CD8-positive, alpha-beta memory T cell (primary cell): ENCODE measurements at regions of chr15 and their contacts with region 1.

Region 1: GRCh38 chr15:42704492-42704926 is 32.4 kb downstream of the CDAN1 start:
- DNase-seq: peak; percentile 20 to 66 (median 41)
- H3K4me3 ChIP-seq: no peak overlapping the region
- H3K4me3 Mint-ChIP-seq: no peak overlapping the region
- H3K27ac ChIP-seq: no peak overlapping the region
- H3K27ac Mint-ChIP-seq: no peak overlapping the region
- H3K4me1 ChIP-seq: no peaks in the 10 kb centered on the region
- H3K4me1 Mint-ChIP-seq: no peaks in the 10 kb centered on the region
- H3K27me3 ChIP-seq: no peaks in the 10 kb centered on the region
- H3K27me3 Mint-ChIP-seq: no peaks in the 10 kb centered on the region

Region 2: GRCh38 chr15:42723054-42723453 is 18.5 kb after region 1 on chr15:
- CTCF ChIA-PET with region 1: no interaction called
- POLR2A ChIA-PET with region 1: no interaction called
- DNase-seq: no peak
- H3K4me3 ChIP-seq: no peak overlapping the region
- H3K4me3 Mint-ChIP-seq: no peak overlapping the region
- H3K27ac ChIP-seq: no peak overlapping the region
- H3K27ac Mint-ChIP-seq: peak overlapping the region in 5 of 8 donors; percentile 34 to 86 (median 52)
- H3K4me1 ChIP-seq: no peaks in the 10 kb centered on the region
- H3K4me1 Mint-ChIP-seq: no peaks in the 10 kb centered on the region
- H3K27me3 ChIP-seq: no peaks in the 10 kb centered on the region
- H3K27me3 Mint-ChIP-seq: no peaks in the 10 kb centered on the region

Region 3: DNA sequence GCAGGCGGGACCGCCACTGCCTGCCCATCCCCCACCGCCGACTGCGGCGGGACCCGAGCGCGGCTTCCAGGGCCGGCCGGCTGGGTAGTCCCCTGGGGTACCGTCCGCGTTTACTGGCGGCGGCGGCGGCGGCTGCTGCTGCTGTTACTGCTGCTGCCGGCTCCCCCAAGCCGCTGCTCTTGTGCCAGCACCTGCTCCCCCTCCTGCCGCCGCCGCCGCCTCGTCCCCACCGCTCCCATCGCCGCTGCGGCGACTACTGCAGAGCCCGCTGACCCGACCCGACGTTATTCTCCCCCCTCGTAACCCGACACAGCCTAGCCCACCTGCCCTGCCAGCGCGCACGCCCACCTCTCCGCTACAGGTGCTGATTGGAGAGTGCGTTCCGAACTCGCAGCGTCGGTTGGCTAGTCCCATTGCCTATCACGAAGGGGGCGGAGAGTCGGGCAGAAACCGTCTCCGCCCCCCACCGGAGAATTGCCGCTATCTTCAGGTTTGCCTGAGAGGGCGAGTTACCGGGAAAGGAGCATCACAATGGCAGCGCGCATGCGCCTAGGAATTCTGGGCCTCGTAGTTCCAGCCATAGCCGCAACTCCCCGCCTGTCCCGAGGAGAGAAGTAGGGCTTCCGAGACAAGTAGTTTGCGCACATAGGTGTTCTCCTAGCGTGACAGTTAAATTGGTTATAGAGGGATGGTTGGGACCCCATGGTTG is 216.2 kb after region 1 on chr15 and contains the start of gene TTBK2:
- CTCF ChIA-PET with region 1: interaction called, 35 read pairs
- POLR2A ChIA-PET with region 1: no interaction called
- DNase-seq: peak; percentile 96 to 99 (median 97)
- H3K4me3 ChIP-seq: peak within 1 kb of the TSS; percentile 71
- H3K4me3 Mint-ChIP-seq: peak within 1 kb of the TSS; percentile 94 to 99 (median 98)
- H3K27ac ChIP-seq: peak within 1 kb of the TSS; percentile 49
- H3K27ac Mint-ChIP-seq: peak within 1 kb of the TSS; percentile 77 to 99 (median 92)
- H3K4me1 ChIP-seq: peaks cover 14% of the 10 kb centered on the region
- H3K4me1 Mint-ChIP-seq: peaks cover 26 to 40% (median 34%) of the 10 kb centered on the region in 3 donors
- H3K27me3 ChIP-seq: no peaks in the 10 kb centered on the region
- H3K27me3 Mint-ChIP-seq: peaks cover 0 to 3% of the 10 kb centered on the region in 2 donors
- total RNA-seq, gene TTBK2: 9.3 to 11.4 TPM